HepG2 (cell line): ENCODE measurements at regions of chr6 and their contacts with region 1.

Region 1: GRCh38 chr6:16409531-16410441 is 171.4 kb downstream of the GMPR start:
- DNase-seq: peak; percentile 45
- ATAC-seq: peak; percentile 82
- H3K4me3 ChIP-seq: no peak overlapping the region
- H3K27ac ChIP-seq: no peak overlapping the region
- H3K4me1 ChIP-seq: no peaks in the 10 kb centered on the region; the same call in 1 of the 2 replicates
- H3K27me3 ChIP-seq: no peaks in the 10 kb centered on the region
- CTCF ChIP-seq: peak; percentile 73
- EP300 ChIP-seq: no peak
- POLR2A ChIP-seq: no peak
- RAD21 ChIP-seq: no peak

Region 2: DNA sequence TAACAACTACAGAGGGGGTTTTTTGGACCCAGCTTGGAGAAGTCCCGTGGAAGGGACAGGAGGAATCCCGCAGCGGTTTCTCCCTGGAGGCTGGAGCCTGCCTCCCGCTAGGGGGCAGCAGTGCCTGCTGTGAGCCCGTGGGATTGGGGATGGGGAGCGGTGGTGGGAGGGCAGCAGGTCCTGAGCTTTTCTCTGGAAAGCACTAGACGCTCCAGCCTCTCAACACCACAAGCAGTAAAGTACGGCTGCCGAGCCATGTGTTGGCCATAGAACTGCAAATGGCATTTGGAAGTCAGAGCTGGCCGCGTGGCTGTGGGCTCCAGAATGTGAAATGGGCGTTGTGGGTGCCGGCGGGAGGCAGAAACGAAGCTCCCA is 123.7 kb before region 1 on chr6:
- CTCF ChIA-PET with region 1: no interaction called
- POLR2A ChIA-PET with region 1: no interaction called
- in situ Hi-C with region 1: no loop called
- intact Hi-C with region 1: loop called (anchors 5 kb)
- DNase-seq: peak; percentile 37
- ATAC-seq: peak; percentile 86
- H3K4me3 ChIP-seq: no peak overlapping the region
- H3K27ac ChIP-seq: no peak overlapping the region
- H3K4me1 ChIP-seq: no peaks in the 10 kb centered on the region
- H3K27me3 ChIP-seq: peaks cover 1 to 11% of the 10 kb centered on the region in 2 experiments; a peak in 2 of 5 replicates
- CTCF ChIP-seq: peak; percentile 94
- EP300 ChIP-seq: no peak
- POLR2A ChIP-seq: no peak
- RAD21 ChIP-seq: peak; percentile 86

Region 3: DNA sequence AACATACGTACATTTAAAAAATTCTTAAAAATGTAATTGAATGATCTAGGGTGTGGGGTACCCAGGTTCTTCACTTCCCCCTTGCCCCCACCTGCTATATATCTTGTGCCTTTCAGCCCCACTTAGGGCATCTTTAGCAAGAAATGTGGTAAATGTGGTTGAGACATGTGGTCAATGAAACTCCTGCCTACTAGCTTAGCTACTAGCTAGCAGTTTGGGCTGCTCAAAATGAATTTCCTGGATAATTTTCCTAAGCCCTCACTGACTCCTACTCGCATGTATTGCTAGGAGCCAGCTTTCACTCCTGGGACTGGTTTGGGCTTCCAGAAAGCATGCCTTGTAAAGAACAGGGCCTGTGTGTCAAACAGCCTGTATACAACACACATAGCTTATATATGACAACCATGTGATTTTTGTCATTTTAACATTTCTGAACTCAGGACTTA is 94.2 kb after region 1 on chr6:
- CTCF ChIA-PET with region 1: no interaction called
- POLR2A ChIA-PET with region 1: no interaction called
- in situ Hi-C with region 1: no loop called
- intact Hi-C with region 1: loop called (anchors 10 kb)
- DNase-seq: no peak
- ATAC-seq: no peak
- H3K4me3 ChIP-seq: no peak overlapping the region
- H3K27ac ChIP-seq: no peak overlapping the region
- H3K4me1 ChIP-seq: no peaks in the 10 kb centered on the region
- H3K27me3 ChIP-seq: no peaks in the 10 kb centered on the region
- CTCF ChIP-seq: no peak
- EP300 ChIP-seq: no peak
- POLR2A ChIP-seq: no peak
- RAD21 ChIP-seq: no peak